ENCODE measurements at regions of chr17 and their contacts with region 1.

Region 1: GRCh38 chr17:1716076-1716995 is 6.2 kb upstream of the TLCD2 start:
- ATAC-seq: peak; percentile 40 to 82 (median 76)
- H3K4me3 ChIP-seq: peak overlapping the region; percentile 78 to 85 (median 80)
- H3K27ac ChIP-seq: peak overlapping the region; percentile 95
- H3K4me1 ChIP-seq: peaks cover 10 to 14% of the 10 kb centered on the region in 2 donors

Region 2: DNA sequence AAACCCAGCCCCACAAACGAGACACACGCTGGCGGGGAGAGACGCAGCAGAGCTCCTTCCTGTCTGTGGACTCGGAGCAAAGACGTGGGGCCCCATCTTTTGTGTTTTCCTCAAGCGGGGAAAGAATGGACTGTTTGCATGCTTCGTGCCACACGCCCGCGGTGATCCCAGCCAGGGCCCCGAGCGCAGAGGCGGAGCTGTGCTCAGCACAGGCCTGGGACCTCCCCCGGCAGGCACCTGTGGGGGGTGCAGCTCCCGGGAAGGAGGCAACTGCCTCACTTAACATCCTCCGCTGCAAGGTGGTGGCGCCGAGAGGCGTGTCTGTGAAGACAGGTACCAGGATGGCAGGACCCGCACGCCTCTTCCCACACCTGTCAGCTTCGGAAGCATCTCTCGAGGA is 417.7 kb before region 1 on chr17:
- in situ Hi-C with region 1: no loop called
- ATAC-seq: peak; percentile 52 to 89 (median 82)
- H3K4me3 ChIP-seq: no peak overlapping the region
- H3K27ac ChIP-seq: no peak overlapping the region
- H3K4me1 ChIP-seq: peaks cover 21 to 29% of the 10 kb centered on the region in 2 donors

Region 3: GRCh38 chr17:2041561-2042366 is 325.4 kb after region 1 on chr17 and contains the start of gene OVCA2:
- in situ Hi-C with region 1: loop called in 4 of 9 experiments (anchors 25 kb)
- ATAC-seq: peak; percentile 80 to 91 (median 87)
- H3K4me3 ChIP-seq: peak within 1 kb of the TSS; percentile 59 to 80 (median 74)
- H3K27ac ChIP-seq: peak within 1 kb of the TSS; percentile 91 to 94
- H3K4me1 ChIP-seq: peaks cover 11 to 23% of the 10 kb centered on the region in 2 donors
- total RNA-seq, gene OVCA2: 10.1 to 28.5 (median 20.2) TPM

Measured in motor neuron (in vitro differentiated cells).